Posterior cingulate gyrus (tissue), 11 donors: ENCODE measurements at regions of chr1 and their contacts with region 1.

Region 1: DNA sequence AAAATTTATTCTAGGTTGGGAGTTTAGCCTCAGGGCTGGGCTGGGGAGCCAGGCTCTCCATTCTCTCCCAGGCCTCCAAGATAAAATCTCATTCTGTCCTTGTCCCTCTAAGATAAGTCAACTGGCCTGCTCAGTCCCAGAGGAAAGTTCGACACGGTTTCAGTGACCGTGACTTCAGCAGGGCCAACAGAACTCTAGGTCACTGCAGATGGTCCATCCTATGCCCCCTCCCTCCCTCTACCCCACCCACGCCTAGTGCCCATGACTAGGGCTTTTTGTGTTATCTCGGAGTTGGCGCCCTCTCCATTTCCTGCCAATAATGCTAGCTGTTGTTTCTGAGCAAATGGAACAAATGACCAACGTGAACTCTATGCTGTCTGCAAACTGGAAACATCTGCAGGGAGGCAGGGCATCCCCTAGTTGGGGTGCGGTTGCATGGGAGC is 10.1 kb upstream of the ADORA3 start:
- DNase-seq: peak in 7 of 10 donors; percentile 59 to 93 (median 75)

Region 2: DNA sequence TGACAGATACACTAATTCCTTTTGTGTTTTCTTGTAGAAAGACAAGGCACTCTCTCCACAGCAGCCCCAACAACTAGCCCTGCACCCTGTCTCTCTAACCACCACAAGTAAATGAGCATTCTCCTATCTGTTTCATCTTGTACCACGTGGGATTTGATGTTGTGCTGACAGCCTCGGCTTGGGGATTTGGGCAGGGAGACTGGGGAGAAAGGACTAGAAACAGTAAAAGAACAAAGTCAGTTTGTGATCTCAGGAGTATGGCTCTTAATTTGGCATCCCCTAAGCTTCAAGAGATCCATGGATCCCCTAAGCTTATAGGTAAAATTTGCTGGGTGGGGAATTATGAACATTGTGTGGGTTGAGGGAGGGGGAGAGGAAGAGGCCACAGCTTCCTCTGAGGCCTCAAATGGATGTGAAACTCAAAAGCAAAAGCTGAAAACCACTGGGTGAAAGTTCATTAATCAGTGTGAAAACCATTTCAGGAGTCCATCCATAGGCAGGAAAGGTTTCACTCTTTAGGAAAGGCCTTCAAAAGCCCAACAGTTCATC is 36.7 kb before region 1 on chr1:
- intact Hi-C with region 1: no loop called
- DNase-seq: no peak

Region 3: DNA sequence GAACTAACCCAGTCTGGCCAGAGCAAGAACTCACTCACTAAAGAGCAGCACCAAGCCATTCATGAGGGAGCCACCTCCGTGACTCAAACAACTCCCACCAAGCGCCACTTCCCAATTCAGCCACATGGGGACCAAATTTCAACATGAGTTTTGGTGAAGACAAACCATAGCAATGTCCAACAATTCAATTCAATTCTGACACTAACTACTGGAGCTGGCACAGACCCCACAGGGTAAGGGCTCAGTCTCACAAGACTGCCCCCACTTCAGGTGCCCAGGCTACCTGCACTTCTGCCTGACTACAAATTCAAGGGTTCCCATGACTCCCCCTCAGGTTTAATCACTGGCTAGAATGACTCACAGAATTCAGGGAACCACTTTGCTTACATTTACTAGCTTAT is 57.3 kb after region 1 on chr1:
- intact Hi-C with region 1: no loop called
- DNase-seq: no peak

Region 4: GRCh38 chr1:111619635-111620440 is 106.3 kb after region 1 on chr1 and contains the start of gene RAP1A:
- intact Hi-C with region 1: loop called (anchors 2 kb)
- DNase-seq: peak; percentile 89 to 99 (median 94)

Region 5: GRCh38 chr1:111672331-111672730 is 158.8 kb after region 1 on chr1:
- intact Hi-C with region 1: no loop called
- DNase-seq: no peak

Region 6: DNA sequence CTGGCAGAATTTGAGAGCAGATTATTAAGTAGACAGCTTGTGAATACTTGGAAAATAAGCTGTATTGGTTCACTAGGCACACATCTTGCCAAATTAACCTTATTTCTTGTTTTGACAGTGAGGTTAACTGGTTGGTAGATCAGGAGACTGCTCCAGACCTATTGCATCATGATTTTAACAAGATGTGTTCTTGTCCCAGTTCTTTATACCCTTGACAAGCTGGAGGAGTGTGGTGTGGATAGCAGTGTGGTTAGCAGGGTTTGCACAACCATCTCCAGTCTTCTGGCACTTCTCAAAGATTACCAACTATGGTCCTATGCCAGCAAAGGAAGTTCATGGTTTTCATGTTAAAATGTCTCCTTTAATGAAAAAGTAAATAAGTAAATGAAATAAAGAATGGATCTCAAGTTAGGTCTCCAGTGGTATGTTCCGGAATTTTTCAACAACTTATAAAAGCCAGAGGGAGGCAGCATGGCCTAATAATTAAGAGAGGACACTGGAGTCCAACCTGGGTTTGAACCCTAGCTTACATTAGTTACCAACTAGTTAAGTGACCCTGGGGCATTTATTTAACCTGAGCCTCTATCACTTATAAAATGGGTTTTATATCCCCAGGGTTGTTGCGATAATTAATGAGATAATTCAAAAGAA is 276.3 kb after region 1 on chr1:
- intact Hi-C with region 1: no loop called
- DNase-seq: no peak